Dorsolateral prefrontal cortex (tissue), 120 donors: ENCODE measurements at regions of chr6 and their contacts with region 1.

Region 1: DNA sequence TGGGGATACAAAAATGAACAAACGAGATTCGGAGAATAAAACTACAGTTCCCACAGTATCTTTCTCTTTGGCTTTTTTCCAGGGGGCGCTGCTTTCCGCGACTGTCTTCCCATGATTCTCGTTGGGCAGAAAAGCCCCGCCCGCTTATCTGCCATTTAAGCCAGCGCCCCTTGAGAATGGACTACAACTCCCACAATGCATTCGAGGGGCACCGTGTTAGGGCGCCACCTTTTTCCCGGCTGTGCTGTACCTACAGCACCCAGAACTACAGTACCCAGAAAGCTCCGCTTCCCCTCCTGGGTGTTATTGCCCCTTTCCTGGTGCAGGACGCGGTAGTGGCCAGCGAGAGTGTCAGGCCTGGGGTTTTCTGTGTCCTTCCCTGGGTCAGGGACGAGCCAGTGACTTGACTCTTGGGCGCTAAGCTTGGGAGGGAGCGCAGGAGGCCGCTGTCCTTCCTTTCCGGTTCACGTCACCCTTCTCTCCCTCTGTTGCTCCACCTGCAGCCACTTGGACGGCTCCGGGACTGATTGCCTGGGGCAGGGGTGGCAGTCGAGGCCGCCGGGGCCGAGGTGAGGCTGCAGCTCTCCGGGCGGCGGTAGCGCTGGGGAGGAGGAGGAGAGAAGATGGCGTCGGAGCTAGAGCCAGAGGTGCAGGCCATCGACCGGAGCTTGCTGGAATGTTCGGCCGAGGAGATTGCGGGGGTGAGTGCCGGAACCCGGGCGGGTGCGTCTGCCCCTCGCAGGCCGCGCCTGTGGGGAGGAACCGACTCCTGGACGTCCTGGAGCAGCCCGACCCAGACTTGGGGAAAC is at the start of gene UBR2:
- DNase-seq: peak; percentile 90 to 99 (median 98)
- H3K4me3 ChIP-seq: peak within 1 kb of the TSS; percentile 57 to 100 (median 92)
- H3K27ac ChIP-seq: peak within 1 kb of the TSS; percentile 69 to 100 (median 97)
- H3K27me3 ChIP-seq: no peaks in the 10 kb centered on the region
- CTCF ChIP-seq: peak in 55 of 56 donors; percentile 29 to 86 (median 67)
- total RNA-seq, gene UBR2: 29.5 to 56.9 (median 37.2) TPM

Region 2: GRCh38 chr6:42088101-42088591 is 475.8 kb before region 1 on chr6:
- intact Hi-C with region 1: no loop called
- DNase-seq: no peak
- H3K4me3 ChIP-seq: no peak overlapping the region
- H3K27ac ChIP-seq: no peak overlapping the region
- H3K27me3 ChIP-seq: no peaks in the 10 kb centered on the region
- CTCF ChIP-seq: no peak

Region 3: GRCh38 chr6:42217519-42218367 is 346.2 kb before region 1 on chr6 and contains the start of gene MRPS10:
- intact Hi-C with region 1: loop called in 1 of 2 experiments (anchors 5 kb)
- DNase-seq: peak; percentile 87 to 96 (median 92)
- H3K4me3 ChIP-seq: peak within 1 kb of the TSS; percentile 54 to 97 (median 80)
- H3K27ac ChIP-seq: peak within 1 kb of the TSS in 54 of 59 donors; percentile 2 to 88 (median 68)
- H3K27me3 ChIP-seq: no peaks in the 10 kb centered on the region
- CTCF ChIP-seq: peak in 52 of 56 donors; percentile 15 to 75 (median 49)
- total RNA-seq, gene MRPS10: 18.8 to 41.4 (median 29.6) TPM

Region 4: GRCh38 chr6:42315991-42316378 is 247.9 kb before region 1 on chr6:
- intact Hi-C with region 1: no loop called
- DNase-seq: no peak
- H3K4me3 ChIP-seq: no peak overlapping the region
- H3K27ac ChIP-seq: no peak overlapping the region
- H3K27me3 ChIP-seq: no peaks in the 10 kb centered on the region
- CTCF ChIP-seq: no peak

Region 5: DNA sequence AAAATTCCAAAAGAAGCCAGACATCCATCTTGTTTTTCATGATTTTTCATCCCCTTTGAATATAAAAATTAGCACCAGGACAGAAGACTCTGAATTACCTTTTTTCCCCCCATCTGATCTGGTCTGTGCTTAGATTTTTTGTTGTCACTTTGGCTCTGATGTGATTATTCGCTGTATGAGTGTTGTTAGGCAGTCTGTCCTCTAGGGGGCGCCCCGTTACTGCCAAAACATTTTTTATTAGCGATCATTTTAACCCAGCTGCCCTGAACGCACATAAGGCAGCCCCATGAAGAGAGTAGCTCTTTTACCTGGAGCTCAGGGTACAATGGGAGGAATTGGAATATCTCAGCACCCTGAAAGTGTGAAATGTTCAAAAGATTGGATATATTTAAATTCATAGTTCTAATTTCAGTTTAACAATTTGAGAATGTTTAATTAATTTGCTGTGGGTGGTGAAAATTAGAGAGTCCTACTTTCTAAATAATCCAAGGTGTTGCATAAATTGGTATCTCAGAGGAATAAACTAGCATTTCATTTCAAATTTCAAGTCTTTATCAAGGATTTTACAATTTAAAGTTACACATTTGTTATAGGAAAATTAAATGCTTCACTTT is 97.7 kb after region 1 on chr6:
- intact Hi-C with region 1: no loop called
- DNase-seq: peak; percentile 61 to 90 (median 74)
- H3K4me3 ChIP-seq: no peak overlapping the region
- H3K27ac ChIP-seq: peak overlapping the region in 4 of 59 donors; percentile 3 to 54 (median 20)
- H3K27me3 ChIP-seq: no peaks in the 10 kb centered on the region
- CTCF ChIP-seq: peak; percentile 67 to 98 (median 91)